Left cardiac atrium (tissue), 4 donors: ENCODE measurements at regions of chr5 and their contacts with region 1.

Region 1: GRCh38 chr5:91311697-91312501 is 71.2 kb downstream of the ARRDC3 start:
- DNase-seq: peak; percentile 71
- ATAC-seq: peak; percentile 76 to 82

Region 2: GRCh38 chr5:91366571-91366970 is 54.7 kb after region 1 on chr5:
- intact Hi-C with region 1: loop called in 1 of 2 experiments (anchors 5 kb)
- DNase-seq: no peak
- ATAC-seq: peak in 1 of 2 donors; percentile 15

Region 3: GRCh38 chr5:92518318-92518904 is 1206.5 kb after region 1 on chr5:
- intact Hi-C with region 1: no loop called
- DNase-seq: no peak
- ATAC-seq: peak; percentile 57 to 63